Mammary epithelial cell (primary cell): ENCODE measurements at regions of chr10 and their contacts with region 1.

Region 1: DNA sequence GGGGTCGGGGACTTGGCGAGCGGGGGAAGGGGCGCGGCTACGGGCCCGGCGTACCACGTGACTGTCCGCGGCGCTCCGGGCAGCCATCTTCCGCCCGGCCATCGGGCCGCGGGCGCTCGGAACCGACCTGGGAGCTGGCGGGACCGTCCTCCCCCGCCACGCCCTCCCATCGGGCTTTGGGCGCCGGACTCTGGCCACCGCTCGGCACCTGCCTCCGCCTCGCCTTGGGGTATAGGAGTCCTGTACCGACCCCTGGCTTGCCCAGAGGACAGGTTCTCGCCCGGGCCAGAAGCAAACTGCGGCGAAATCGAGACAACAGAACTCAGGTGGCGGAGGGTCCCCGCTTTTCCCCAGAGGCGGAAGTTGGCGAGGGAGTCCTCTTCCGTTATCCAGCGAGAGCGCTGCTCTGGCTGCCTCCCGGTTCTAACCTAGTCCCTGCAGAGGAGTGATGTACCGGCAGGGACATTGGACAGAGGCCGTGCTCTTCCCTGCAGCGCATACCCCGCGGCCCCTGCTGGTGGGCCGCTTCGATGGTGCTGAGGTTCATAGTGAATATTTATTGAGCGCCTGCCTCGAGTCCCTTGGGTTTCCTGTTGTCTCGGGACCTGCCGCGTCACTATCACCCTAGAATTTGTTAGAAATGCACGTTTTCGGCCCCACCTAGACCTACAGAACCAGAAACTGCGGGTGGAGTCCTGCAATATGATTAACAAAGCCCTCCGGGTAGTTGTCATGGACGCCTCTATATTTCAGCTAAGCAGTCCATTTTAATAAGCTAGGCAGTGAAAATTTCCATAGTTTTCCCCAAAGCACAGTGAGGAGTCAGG is 1.3 kb upstream of the SGMS1 start:
- DNase-seq: peak; percentile 58
- H3K4me3 ChIP-seq: peak overlapping the region; percentile 79 to 86 (median 82)
- H3K27ac ChIP-seq: peak overlapping the region; percentile 70
- H3K4me1 ChIP-seq: peaks cover 32% of the 10 kb centered on the region
- H3K27me3 ChIP-seq: no peaks in the 10 kb centered on the region
- CTCF ChIP-seq: peak; percentile 28 to 60

Region 2: GRCh38 chr10:50231515-50232260 is 393.4 kb before region 1 on chr10:
- CTCF ChIA-PET with region 1: no interaction called
- dilution Hi-C with region 1: no loop called
- in situ Hi-C with region 1: no loop called
- intact Hi-C with region 1: no loop called
- DNase-seq: no peak
- H3K4me3 ChIP-seq: no peak overlapping the region
- H3K27ac ChIP-seq: no peak overlapping the region
- H3K4me1 ChIP-seq: no peaks in the 10 kb centered on the region
- H3K27me3 ChIP-seq: peaks cover 4% of the 10 kb centered on the region
- CTCF ChIP-seq: no peak

Region 3: GRCh38 chr10:50291261-50291850 is 333.7 kb before region 1 on chr10:
- CTCF ChIA-PET with region 1: no interaction called
- dilution Hi-C with region 1: no loop called
- in situ Hi-C with region 1: no loop called
- intact Hi-C with region 1: loop called (anchors 1 kb)
- DNase-seq: no peak
- H3K4me3 ChIP-seq: no peak overlapping the region
- H3K27ac ChIP-seq: no peak overlapping the region
- H3K4me1 ChIP-seq: no peaks in the 10 kb centered on the region
- H3K27me3 ChIP-seq: no peaks in the 10 kb centered on the region
- CTCF ChIP-seq: peak; percentile 30 to 71

Region 4: DNA sequence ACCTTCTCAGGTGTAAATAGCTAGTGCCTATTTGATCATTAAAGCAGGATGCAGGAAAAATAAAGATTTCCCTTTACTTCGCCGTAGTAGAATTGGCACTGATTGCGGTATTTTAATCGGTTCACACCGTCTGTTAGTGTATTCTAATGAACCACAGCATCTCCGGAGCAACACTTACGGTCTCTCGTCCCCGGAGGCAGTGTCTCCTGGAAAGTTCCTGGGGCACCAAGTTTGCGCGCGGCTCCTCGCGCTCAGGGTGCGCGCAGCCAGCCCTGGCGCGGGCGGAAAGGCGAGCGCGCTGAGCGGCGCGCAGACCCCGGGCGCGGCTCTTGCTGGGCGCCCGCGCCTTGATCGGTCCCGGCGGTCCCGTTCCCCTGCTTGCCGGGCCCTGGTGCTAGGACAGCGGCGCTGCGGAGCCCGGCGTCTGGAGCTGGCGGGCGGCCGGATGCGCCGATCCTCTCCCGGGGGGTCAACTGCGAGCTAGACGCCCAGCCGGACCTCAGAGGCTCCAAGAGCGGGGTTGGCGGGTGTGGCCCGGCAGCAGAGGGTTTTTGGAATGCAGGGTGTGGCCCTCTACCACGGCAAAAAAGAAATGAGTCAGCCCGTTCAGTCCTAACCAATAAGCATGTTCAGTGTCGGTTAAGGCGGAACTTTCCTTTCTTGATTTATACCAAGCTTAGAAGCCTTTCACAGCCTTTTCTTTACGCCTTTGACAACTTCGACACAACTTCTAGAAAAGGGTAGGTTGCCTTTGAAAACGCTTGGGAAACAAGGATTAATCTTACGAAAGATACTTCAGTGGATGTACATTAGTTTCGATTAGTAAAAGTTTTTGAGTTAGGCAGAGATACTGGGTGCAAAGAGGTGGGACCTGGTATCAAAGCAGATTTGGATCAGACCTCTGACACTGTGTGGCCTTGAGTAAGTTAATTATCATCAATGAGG is 206.9 kb before region 1 on chr10:
- CTCF ChIA-PET with region 1: no interaction called
- dilution Hi-C with region 1: no loop called
- in situ Hi-C with region 1: no loop called
- intact Hi-C with region 1: loop called (anchors 2 kb)
- DNase-seq: peak; percentile 91
- H3K4me3 ChIP-seq: peak overlapping the region; percentile 72 to 91 (median 89)
- H3K27ac ChIP-seq: peak overlapping the region; percentile 88
- H3K4me1 ChIP-seq: peaks cover 8% of the 10 kb centered on the region
- H3K27me3 ChIP-seq: no peaks in the 10 kb centered on the region
- CTCF ChIP-seq: peak in 1 of 2 donors; percentile 11

Region 5: GRCh38 chr10:50490241-50490640 is 134.8 kb before region 1 on chr10:
- CTCF ChIA-PET with region 1: no interaction called
- dilution Hi-C with region 1: no loop called
- in situ Hi-C with region 1: no loop called
- intact Hi-C with region 1: no loop called
- DNase-seq: no peak
- H3K4me3 ChIP-seq: no peak overlapping the region
- H3K27ac ChIP-seq: no peak overlapping the region
- H3K4me1 ChIP-seq: no peaks in the 10 kb centered on the region
- H3K27me3 ChIP-seq: no peaks in the 10 kb centered on the region
- CTCF ChIP-seq: no peak

Region 6: GRCh38 chr10:50501918-50502452 is 123.1 kb before region 1 on chr10:
- CTCF ChIA-PET with region 1: no interaction called
- dilution Hi-C with region 1: no loop called
- in situ Hi-C with region 1: no loop called
- intact Hi-C with region 1: loop called (anchors 5 kb)
- DNase-seq: peak; percentile 14
- H3K4me3 ChIP-seq: no peak overlapping the region
- H3K27ac ChIP-seq: peak overlapping the region; percentile 27
- H3K4me1 ChIP-seq: peaks cover 24% of the 10 kb centered on the region
- H3K27me3 ChIP-seq: no peaks in the 10 kb centered on the region
- CTCF ChIP-seq: no peak

Region 7: DNA sequence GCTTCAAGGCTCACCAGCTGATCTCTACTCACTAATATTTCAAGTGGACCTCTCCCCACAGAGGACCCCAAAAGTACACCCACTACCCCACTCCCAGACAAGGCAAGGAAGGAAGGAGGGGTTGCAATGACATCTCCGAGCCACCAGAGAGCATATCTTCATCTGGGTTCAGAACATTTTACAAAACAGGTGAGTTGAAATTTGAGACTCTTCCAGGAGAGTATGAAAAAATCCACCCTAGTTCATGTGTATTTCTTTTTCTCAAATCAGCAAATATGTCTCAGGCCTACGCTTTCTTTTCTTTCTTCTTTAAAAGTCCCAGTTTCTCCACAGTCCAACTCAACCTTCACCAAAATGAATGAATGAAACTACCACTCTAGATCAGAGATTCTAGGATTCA is 63.3 kb before region 1 on chr10:
- CTCF ChIA-PET with region 1: no interaction called
- dilution Hi-C with region 1: no loop called
- in situ Hi-C with region 1: no loop called
- intact Hi-C with region 1: loop called (anchors 1 kb)
- DNase-seq: no peak
- H3K4me3 ChIP-seq: no peak overlapping the region
- H3K27ac ChIP-seq: no peak overlapping the region
- H3K4me1 ChIP-seq: no peaks in the 10 kb centered on the region
- H3K27me3 ChIP-seq: no peaks in the 10 kb centered on the region
- CTCF ChIP-seq: peak; percentile 60 to 75

Region 8: DNA sequence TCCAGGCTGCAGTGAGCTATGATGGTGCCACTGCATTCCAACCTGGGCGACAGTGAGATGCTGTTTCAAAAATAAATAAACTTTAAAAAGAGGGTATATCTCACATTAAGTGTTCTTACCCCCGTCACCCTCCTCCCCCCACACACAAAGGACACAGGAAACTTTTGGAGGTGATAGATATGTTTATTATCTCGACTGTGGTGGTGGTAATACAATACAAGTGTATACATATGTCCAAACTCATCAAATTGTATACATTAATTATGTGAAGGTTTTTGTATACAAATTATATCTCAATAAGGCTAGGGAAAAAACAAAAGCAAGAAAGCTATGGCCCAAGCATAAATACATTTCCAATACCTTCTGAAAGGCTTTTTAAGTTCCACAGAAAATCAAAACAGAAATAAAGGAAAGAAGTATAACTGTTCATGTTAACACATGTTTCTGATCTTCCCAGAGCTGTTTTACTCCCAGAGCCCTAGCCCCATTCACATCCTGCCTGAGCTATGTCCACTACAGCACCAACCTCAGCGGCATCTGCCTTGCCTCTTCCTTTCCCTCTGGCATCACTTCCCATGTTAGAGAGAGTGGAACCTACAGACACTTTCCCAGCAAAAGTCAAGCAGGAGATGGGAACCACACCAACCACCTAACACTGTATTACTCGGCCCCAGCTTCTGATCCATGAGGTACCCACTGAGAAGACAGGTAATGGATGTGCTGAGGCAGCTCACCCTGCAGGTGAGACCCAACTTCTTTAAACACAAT is 49.4 kb before region 1 on chr10:
- CTCF ChIA-PET with region 1: no interaction called
- dilution Hi-C with region 1: no loop called
- in situ Hi-C with region 1: no loop called
- intact Hi-C with region 1: no loop called
- DNase-seq: no peak
- H3K4me3 ChIP-seq: no peak overlapping the region
- H3K27ac ChIP-seq: no peak overlapping the region
- H3K4me1 ChIP-seq: peaks cover 2% of the 10 kb centered on the region
- H3K27me3 ChIP-seq: no peaks in the 10 kb centered on the region
- CTCF ChIP-seq: no peak

Region 9: DNA sequence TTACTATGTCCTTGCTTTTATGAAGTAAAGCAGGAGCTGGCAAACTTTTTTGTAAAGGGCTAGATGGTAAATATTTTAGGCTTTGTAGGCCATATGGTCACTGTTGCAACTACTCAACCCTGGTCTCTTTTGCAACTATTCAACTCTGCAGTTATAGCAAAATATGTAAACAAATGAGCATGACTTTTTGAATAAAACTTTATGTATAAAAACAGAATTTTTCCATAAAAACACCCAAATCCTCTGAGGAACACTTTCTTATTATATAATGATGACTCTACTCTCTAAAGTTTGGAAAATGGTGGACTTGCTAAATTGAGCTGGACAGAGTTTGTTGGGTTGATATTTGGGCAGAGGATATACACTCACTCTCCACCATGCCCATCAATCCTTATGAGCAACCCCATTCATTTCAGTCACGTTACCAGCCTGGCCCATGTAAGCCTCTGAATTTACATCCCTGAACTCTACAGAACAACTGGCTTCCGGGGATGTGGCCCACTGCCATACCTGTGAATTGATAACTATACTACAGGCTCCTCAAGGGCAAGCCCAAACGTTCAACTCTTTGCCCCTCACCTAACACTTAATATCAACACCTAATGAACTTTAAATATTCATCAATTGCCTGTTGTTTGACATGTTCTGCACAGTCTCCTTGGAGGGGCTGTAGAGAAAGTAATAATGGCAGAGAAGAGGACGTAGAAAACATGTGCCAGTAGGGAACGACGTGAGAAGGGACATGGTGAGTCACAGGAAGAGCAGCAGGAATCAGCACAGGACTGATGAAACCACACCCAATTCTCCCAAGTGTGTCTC is 38.9 kb before region 1 on chr10:
- CTCF ChIA-PET with region 1: no interaction called
- dilution Hi-C with region 1: no loop called
- in situ Hi-C with region 1: no loop called
- intact Hi-C with region 1: loop called (anchors 1 kb)
- DNase-seq: peak; percentile 60
- H3K4me3 ChIP-seq: no peak overlapping the region
- H3K27ac ChIP-seq: no peak overlapping the region
- H3K4me1 ChIP-seq: peaks cover 10% of the 10 kb centered on the region
- H3K27me3 ChIP-seq: no peaks in the 10 kb centered on the region
- CTCF ChIP-seq: no peak

Region 10: GRCh38 chr10:50605269-50606263 is 19.5 kb before region 1 on chr10:
- CTCF ChIA-PET with region 1: interaction called, 5 read pairs
- dilution Hi-C with region 1: no loop called
- in situ Hi-C with region 1: no loop called
- intact Hi-C with region 1: loop called (anchors 1 kb)
- DNase-seq: peak; percentile 96
- H3K4me3 ChIP-seq: no peak overlapping the region
- H3K27ac ChIP-seq: no peak overlapping the region
- H3K4me1 ChIP-seq: peaks cover 49% of the 10 kb centered on the region
- H3K27me3 ChIP-seq: no peaks in the 10 kb centered on the region
- CTCF ChIP-seq: no peak

Region 11: GRCh38 chr10:50807851-50808776 is 183.0 kb after region 1 on chr10:
- CTCF ChIA-PET with region 1: no interaction called
- dilution Hi-C with region 1: no loop called
- in situ Hi-C with region 1: no loop called
- intact Hi-C with region 1: no loop called
- DNase-seq: no peak
- H3K4me3 ChIP-seq: no peak overlapping the region
- H3K27ac ChIP-seq: no peak overlapping the region
- H3K4me1 ChIP-seq: no peaks in the 10 kb centered on the region
- H3K27me3 ChIP-seq: peaks cover 3% of the 10 kb centered on the region
- CTCF ChIP-seq: no peak